Naive thymus-derived CD8-positive, alpha-beta T cell (primary cell): ENCODE measurements at regions of chr4 and their contacts with region 1.

Region 1: DNA sequence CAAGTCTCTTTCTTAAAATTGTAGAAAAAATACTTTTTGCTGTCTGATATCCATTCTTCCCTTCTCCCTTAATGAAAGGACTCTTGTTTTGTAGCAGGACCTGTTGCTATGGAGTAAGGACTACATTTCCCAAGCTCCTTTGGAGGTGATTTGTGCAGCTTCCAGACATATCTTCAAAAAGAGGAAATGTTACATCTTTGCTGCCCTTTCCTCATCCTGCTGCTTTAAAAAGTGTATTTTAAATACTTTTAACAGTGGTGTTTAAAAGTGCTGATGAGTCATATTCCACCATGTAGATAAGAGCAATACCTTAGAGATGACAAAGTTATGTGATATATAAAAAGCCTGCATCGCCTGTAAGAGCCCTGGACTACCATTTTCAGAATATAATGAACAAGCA is 98.7 kb downstream of the CFAP299 start:
- DNase-seq: no peak
- ATAC-seq: no peak
- H3K4me3 Mint-ChIP-seq: no peak overlapping the region
- H3K27ac Mint-ChIP-seq: peak overlapping the region in 1 of 10 donors; percentile 43
- H3K4me1 Mint-ChIP-seq: peaks cover 23 to 37% (median 31%) of the 10 kb centered on the region in 4 donors
- H3K27me3 Mint-ChIP-seq: no peaks in the 10 kb centered on the region

Region 2: DNA sequence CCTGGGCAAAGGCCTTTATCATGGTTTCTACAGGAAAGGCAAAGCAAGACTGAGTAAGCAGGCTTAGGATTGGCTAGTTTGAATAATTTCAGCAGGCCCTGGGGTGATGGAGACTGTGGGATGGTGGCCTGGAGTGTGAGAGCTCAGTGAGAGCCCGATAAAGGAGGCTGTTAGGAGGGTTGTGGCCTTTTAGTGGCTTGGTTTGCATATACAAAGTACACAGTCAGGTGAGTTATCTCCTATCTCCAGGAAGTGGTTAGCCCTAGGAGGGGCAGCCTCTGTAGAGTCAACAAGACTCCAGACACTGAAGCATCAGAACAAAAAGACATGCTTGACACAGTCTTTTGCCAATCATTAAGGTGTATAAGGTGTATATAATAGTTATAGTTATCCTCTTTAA is 58.5 kb after region 1 on chr4:
- POLR2A ChIA-PET with region 1: interaction called, 11 read pairs
- DNase-seq: peak in 9 of 10 donors; percentile 19 to 86 (median 64)
- ATAC-seq: peak; percentile 99
- H3K4me3 Mint-ChIP-seq: peak overlapping the region; percentile 38 to 80 (median 66)
- H3K27ac Mint-ChIP-seq: peak overlapping the region; percentile 91 to 99 (median 96)
- H3K4me1 Mint-ChIP-seq: peaks cover 32 to 66% (median 60%) of the 10 kb centered on the region in 4 donors
- H3K27me3 Mint-ChIP-seq: no peaks in the 10 kb centered on the region

Region 3: GRCh38 chr4:80631861-80632260 is 197.6 kb after region 1 on chr4:
- POLR2A ChIA-PET with region 1: no interaction called
- DNase-seq: no peak
- ATAC-seq: no peak
- H3K4me3 Mint-ChIP-seq: no peak overlapping the region
- H3K27ac Mint-ChIP-seq: no peak overlapping the region
- H3K4me1 Mint-ChIP-seq: no peaks in the 10 kb centered on the region
- H3K27me3 Mint-ChIP-seq: no peaks in the 10 kb centered on the region

Region 4: GRCh38 chr4:80788798-80789197 is 354.6 kb after region 1 on chr4:
- POLR2A ChIA-PET with region 1: no interaction called
- DNase-seq: peak in 1 of 10 donors; percentile 11
- ATAC-seq: no peak
- H3K4me3 Mint-ChIP-seq: no peak overlapping the region
- H3K27ac Mint-ChIP-seq: peak overlapping the region in 1 of 10 donors; percentile 20
- H3K4me1 Mint-ChIP-seq: peaks cover 7 to 22% (median 9%) of the 10 kb centered on the region in 4 donors
- H3K27me3 Mint-ChIP-seq: no peaks in the 10 kb centered on the region